Activated CD4-positive, alpha-beta T cell treated with anti-CD3 and anti-CD28 coated beads for 36 hours (primary cell): ENCODE measurements at regions of chr11 and their contacts with region 1.

Region 1: GRCh38 chr11:64284048-64284961 is at the start of gene BAD:
- DNase-seq: peak; percentile 97
- ATAC-seq: peak; percentile 88
- H3K4me3 Mint-ChIP-seq: peak within 1 kb of the TSS; percentile 77
- H3K27ac Mint-ChIP-seq: peak within 1 kb of the TSS; percentile 85
- H3K4me1 Mint-ChIP-seq: peaks cover 18% of the 10 kb centered on the region
- H3K27me3 Mint-ChIP-seq: no peaks in the 10 kb centered on the region
- total RNA-seq, gene BAD: 21.3 to 22.9 TPM

Region 2: DNA sequence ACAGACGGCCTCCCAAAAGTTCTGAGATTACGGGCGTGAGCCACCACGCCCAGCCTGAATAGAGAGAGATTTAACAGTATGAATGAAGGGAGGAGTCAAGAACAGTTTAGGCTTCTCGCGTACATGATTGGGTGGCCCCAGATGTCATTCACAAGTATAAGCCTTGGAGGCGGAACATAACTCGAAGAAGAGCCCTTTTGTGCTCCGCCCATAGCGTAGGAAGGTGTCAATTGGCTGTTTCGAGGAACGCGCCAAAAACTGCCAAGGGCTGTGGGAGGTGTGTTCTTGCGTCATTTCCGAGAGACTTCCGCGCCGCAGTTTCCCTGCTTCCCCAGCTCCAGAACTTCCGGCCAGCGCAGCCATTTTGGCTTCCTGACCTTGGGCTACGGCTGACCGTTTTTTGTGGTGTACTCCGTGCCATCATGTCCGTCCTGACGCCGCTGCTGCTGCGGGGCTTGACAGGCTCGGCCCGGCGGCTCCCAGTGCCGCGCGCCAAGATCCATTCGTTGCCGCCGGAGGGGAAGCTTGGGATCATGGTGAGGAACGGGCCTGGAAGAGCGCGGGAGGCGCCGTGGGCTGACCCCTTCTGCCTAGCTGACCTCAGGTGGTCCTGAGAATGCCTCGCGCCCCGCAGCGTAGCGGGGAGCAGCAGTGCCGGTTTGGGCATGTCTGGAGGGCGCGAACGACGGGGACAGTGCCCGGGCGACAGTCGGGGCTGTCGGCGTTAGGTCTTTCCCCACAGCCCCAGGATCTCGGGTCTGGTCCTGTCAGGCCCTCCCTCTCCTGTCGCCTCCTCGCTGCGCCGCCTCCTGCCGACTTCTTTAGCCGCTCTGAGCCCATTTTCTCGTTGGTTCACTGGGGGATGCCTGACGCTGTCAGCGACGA is 309.8 kb before region 1 on chr11 and contains the start of gene COX8A:
- CTCF ChIA-PET with region 1: no interaction called
- POLR2A ChIA-PET with region 1: no interaction called
- intact Hi-C with region 1: loop called in 1 of 2 experiments (anchors 1 kb)
- DNase-seq: peak; percentile 97
- ATAC-seq: peak; percentile 100
- H3K4me3 Mint-ChIP-seq: peak within 1 kb of the TSS; percentile 95
- H3K27ac Mint-ChIP-seq: peak within 1 kb of the TSS; percentile 97
- H3K4me1 Mint-ChIP-seq: peaks cover 20% of the 10 kb centered on the region
- H3K27me3 Mint-ChIP-seq: no peaks in the 10 kb centered on the region
- total RNA-seq, gene COX8A: 413 to 454 TPM

Region 3: GRCh38 chr11:64185816-64186498 is 98.3 kb before region 1 on chr11 and contains the start of gene STIP1:
- CTCF ChIA-PET with region 1: no interaction called
- POLR2A ChIA-PET with region 1: no interaction called
- intact Hi-C with region 1: loop called in 1 of 2 experiments (anchors 1 kb)
- DNase-seq: peak; percentile 99
- ATAC-seq: peak; percentile 92
- H3K4me3 Mint-ChIP-seq: no peak within 1 kb of the TSS
- H3K27ac Mint-ChIP-seq: peak within 1 kb of the TSS; percentile 92
- H3K4me1 Mint-ChIP-seq: peaks cover 42% of the 10 kb centered on the region
- H3K27me3 Mint-ChIP-seq: no peaks in the 10 kb centered on the region
- total RNA-seq, gene STIP1: 398 to 403 TPM

Region 4: GRCh38 chr11:64225612-64226506 is 58.4 kb before region 1 on chr11 and contains the starts of genes NUDT22 and TRPT1:
- CTCF ChIA-PET with region 1: interaction called, 4 read pairs
- POLR2A ChIA-PET with region 1: no interaction called
- intact Hi-C with region 1: loop called in 1 of 2 experiments (anchors 1 kb)
- DNase-seq: peak; percentile 96
- ATAC-seq: peak; percentile 72
- H3K4me3 Mint-ChIP-seq: peak within 1 kb of the TSS; percentile 87
- H3K27ac Mint-ChIP-seq: peak within 1 kb of the TSS; percentile 85
- H3K4me1 Mint-ChIP-seq: peaks cover 32% of the 10 kb centered on the region
- H3K27me3 Mint-ChIP-seq: no peaks in the 10 kb centered on the region
- total RNA-seq, gene NUDT22: 61.8 to 74.1 TPM
- total RNA-seq, gene TRPT1: 23.9 to 27.1 TPM

Region 5: DNA sequence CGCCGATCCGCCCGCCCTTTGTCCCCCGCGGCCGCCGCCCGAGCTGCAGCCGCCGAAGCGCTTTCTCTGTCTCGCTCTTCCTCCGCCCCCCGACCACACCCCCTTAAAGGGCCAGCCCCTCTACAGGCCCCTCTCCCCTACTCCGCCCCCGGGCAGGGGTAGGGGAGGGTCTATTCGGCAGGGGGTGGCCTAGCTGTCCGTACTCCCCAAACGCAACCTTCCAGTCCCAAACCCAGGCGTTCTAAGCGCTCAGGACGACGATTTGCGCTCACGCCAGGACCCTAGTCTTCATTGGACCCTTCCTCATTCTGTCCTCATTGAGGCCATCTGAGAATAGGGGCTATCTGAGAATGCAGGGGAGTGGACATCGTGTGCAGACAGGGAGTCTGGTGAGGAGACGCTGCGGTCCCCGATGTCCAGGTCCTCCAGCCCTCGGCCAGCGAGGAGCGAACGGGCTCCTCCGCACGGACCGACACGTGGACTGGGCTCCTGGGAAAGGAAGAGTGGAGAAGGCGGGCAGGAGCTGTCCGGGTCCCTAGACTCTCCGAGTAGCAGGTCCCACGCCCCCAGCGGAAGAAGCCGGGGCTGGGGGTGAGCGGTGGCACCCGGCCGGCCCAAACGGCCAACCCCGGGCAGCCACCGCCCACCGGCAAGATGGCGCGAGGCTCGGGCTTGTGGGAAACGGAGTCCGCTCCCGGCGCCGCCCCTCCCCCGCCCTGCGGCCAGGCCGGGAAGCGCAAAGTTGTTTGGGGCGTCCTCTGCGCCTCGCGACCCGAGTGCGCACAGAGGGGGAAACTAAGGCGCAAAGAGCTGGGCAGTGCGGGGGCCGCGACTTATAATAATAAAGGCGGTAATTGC is 37.2 kb before region 1 on chr11 and contains the start of gene PPP1R14B:
- CTCF ChIA-PET with region 1: interaction called, 6 read pairs
- POLR2A ChIA-PET with region 1: no interaction called
- intact Hi-C with region 1: loop called in 1 of 2 experiments (anchors 1 kb)
- DNase-seq: peak; percentile 89
- ATAC-seq: peak; percentile 54
- H3K4me3 Mint-ChIP-seq: peak within 1 kb of the TSS; percentile 94
- H3K27ac Mint-ChIP-seq: peak within 1 kb of the TSS; percentile 92
- H3K4me1 Mint-ChIP-seq: peaks cover 34% of the 10 kb centered on the region
- H3K27me3 Mint-ChIP-seq: no peaks in the 10 kb centered on the region
- total RNA-seq, gene PPP1R14B: 261 to 267 TPM

Region 6: GRCh38 chr11:64317957-64318693 is 33.8 kb after region 1 on chr11 and contains the start of gene PRDX5:
- CTCF ChIA-PET with region 1: no interaction called
- POLR2A ChIA-PET with region 1: no interaction called
- intact Hi-C with region 1: loop called (anchors 1 kb)
- DNase-seq: peak; percentile 97
- ATAC-seq: peak; percentile 84
- H3K4me3 Mint-ChIP-seq: peak within 1 kb of the TSS; percentile 97
- H3K27ac Mint-ChIP-seq: peak within 1 kb of the TSS; percentile 99
- H3K4me1 Mint-ChIP-seq: peaks cover 26% of the 10 kb centered on the region
- H3K27me3 Mint-ChIP-seq: no peaks in the 10 kb centered on the region
- total RNA-seq, gene PRDX5: 110 to 142 TPM

Region 7: GRCh38 chr11:64358907-64359711 is 74.8 kb after region 1 on chr11 and contains the start of gene RPS6KA4:
- CTCF ChIA-PET with region 1: no interaction called
- POLR2A ChIA-PET with region 1: no interaction called
- intact Hi-C with region 1: loop called in 1 of 2 experiments (anchors 1 kb)
- DNase-seq: peak; percentile 80
- ATAC-seq: peak; percentile 69
- H3K4me3 Mint-ChIP-seq: peak within 1 kb of the TSS; percentile 85
- H3K27ac Mint-ChIP-seq: peak within 1 kb of the TSS; percentile 56
- H3K4me1 Mint-ChIP-seq: peaks cover 36% of the 10 kb centered on the region
- H3K27me3 Mint-ChIP-seq: no peaks in the 10 kb centered on the region
- total RNA-seq, gene RPS6KA4: 22.0 to 30.2 TPM

Region 8: DNA sequence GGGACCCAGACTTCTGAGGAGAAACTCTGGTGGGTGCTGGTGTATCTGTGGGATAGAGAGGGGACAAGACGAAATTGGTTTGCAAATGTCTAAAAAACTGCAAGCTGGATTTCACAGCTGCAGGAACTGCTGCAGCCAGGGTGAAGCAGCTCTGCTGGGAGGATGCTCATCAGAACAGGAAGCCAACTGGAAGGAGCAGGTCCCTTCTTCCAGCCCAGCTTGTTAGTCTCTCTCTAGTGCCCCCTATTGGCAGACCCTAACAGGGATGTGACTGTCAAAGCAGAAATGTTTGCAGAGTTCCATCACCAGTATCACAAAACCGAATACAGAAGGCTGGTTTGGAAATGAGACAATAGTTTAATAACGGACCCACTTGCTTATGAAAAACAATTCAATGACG is 231.9 kb after region 1 on chr11:
- CTCF ChIA-PET with region 1: no interaction called
- POLR2A ChIA-PET with region 1: no interaction called
- intact Hi-C with region 1: no loop called
- DNase-seq: peak; percentile 35
- ATAC-seq: no peak
- H3K4me3 Mint-ChIP-seq: no peak overlapping the region
- H3K27ac Mint-ChIP-seq: no peak overlapping the region
- H3K4me1 Mint-ChIP-seq: no peaks in the 10 kb centered on the region
- H3K27me3 Mint-ChIP-seq: peaks cover 8% of the 10 kb centered on the region